ENCODE measurements at regions of chrX and their contacts with region 1.

Region 1: DNA sequence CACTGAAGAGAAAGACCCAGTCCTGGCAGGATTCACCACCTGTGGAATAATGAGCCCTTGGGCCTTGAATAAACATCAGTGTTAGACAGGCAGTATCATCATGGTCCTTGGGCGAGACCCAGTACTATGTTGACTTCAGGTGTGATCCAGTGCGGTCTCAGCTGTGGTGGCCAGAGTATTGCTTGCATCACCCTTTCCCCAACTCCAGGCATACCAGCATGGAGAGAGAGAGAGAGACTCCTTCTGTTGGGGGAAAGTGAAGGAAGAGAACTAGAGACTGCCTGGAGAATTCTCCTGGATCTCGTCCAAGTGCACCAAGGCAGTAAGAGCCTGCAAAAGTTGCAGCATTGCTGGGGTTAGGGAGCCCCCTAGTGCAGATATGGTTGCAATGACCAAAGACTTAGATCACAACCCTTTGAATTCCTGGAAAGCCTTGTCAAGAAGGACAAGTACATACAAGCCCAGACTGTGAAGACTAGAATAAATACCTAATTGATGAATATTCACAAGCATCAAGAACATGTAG is 61.1 kb upstream of the VAMP7 start:
- DNase-seq: peak; percentile 79
- H3K4me3 ChIP-seq: no peak overlapping the region
- H3K27ac ChIP-seq: no peak overlapping the region
- H3K4me1 ChIP-seq: no peaks in the 10 kb centered on the region
- H3K27me3 ChIP-seq: no peaks in the 10 kb centered on the region
- CTCF ChIP-seq: peak; percentile 15 to 53 (median 42)
- EP300 ChIP-seq: no peak
- POLR2A ChIP-seq: no peak

Region 2: GRCh38 chrX:154918060-154918483 is 902.0 kb before region 1 on chrX:
- intact Hi-C with region 1: loop called (anchors 5 kb)
- DNase-seq: peak; percentile 86
- H3K4me3 ChIP-seq: peak overlapping the region in 1 of 4 donors; percentile 13
- H3K27ac ChIP-seq: no peak overlapping the region
- H3K4me1 ChIP-seq: no peaks in the 10 kb centered on the region
- H3K27me3 ChIP-seq: no peaks in the 10 kb centered on the region
- CTCF ChIP-seq: peak in 3 of 4 experiments; percentile 17 to 49 (median 18)
- EP300 ChIP-seq: no peak
- POLR2A ChIP-seq: no peak

Region 3: GRCh38 chrX:155094468-155095061 is 725.5 kb before region 1 on chrX:
- intact Hi-C with region 1: loop called (anchors 2 kb)
- DNase-seq: no peak
- H3K4me3 ChIP-seq: no peak overlapping the region
- H3K27ac ChIP-seq: no peak overlapping the region
- H3K4me1 ChIP-seq: no peaks in the 10 kb centered on the region
- H3K27me3 ChIP-seq: no peaks in the 10 kb centered on the region
- CTCF ChIP-seq: peak; percentile 8 to 53 (median 45)
- EP300 ChIP-seq: no peak
- POLR2A ChIP-seq: no peak

Region 4: DNA sequence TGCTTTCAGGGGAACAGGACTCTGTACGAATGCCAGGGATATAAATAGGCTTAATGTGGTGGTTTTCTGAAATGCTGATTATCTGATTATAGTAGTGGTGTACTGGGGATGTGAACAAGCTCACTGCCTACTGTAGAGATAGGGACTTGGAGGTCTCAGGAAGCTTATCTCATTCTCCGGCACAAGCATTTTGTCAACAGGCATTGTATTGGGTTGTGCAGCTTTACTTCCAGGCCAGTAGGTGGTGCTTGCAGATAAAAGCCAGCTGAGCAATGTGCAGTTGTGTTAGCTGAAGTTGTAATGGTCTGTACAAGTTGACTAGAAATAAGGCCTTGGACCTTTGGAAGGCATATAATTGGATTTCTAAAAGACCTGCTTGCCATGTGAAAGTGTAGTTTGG is 157.7 kb before region 1 on chrX:
- intact Hi-C with region 1: no loop called
- DNase-seq: no peak
- H3K4me3 ChIP-seq: no peak overlapping the region
- H3K27ac ChIP-seq: no peak overlapping the region
- H3K4me1 ChIP-seq: no peaks in the 10 kb centered on the region
- H3K27me3 ChIP-seq: no peaks in the 10 kb centered on the region
- CTCF ChIP-seq: no peak
- EP300 ChIP-seq: no peak
- POLR2A ChIP-seq: no peak

Region 5: DNA sequence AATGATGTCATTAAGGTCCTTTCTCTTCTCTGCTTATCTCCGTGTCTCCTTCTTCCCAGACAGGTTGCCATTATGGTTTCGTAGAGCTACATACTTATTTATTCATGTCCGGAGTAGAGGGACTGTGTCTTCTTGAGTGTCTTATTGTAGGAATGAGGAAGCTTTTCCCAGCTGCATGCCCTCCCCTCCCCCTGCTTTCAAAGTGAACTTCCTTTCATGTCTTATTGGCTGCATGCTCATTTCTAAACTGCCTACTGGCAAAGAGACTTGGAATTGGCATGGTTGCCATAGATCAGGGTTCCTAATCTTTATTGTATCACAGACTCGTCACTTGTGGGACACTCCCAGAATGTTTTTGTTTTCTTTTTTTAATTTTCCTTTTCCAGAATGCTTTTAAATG is 76.5 kb after region 1 on chrX:
- intact Hi-C with region 1: no loop called
- DNase-seq: no peak
- H3K4me3 ChIP-seq: no peak overlapping the region
- H3K27ac ChIP-seq: no peak overlapping the region
- H3K4me1 ChIP-seq: no peaks in the 10 kb centered on the region
- H3K27me3 ChIP-seq: no peaks in the 10 kb centered on the region
- CTCF ChIP-seq: no peak
- EP300 ChIP-seq: no peak
- POLR2A ChIP-seq: no peak

Measured in sigmoid colon (tissue), 7 donors.